ENCODE measurements at regions of chr3 and their contacts with region 1.

Region 1: DNA sequence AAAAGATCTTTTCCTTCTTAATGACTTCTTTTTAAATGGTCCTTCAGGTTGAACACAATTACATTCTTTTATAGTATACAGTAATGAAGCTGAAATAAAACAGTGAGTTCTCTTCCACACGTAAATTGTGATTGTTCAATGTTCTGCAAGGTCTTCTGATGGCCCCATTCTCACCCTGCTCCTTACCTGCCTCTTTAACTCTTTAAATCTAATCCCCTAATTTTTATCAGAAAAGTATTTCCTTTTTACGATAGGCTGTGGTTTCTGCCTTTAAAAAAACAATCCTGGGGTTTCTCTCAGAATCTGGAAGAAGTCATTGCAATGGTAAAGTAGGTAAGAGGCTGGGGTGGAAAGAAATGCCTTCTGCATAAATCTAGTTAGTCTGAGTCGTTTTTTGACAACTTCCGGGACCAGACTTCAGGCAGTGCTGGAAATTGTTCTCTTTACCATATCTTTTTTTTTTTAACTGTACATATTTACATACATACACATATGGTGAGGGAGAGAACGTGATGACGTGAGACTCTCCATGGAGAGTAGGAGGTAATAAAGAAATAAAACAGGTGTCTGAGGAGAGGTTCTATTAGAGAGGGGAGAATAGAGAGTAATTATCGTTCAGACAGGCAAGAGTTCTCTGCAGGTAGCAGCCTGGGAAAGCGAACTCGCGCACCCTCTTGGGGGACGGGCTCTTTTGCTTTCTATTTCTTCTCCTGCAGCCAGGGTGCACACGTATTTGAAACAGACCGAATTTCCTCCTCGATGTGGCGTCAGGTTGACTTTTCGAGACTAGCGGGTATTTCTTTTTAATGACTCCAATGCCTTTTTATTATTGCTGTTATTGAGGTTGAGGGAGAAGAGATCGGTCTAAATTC is at the start of gene SIDT1:
- DNase-seq: peak; percentile 85
- ATAC-seq: peak; percentile 78
- H3K4me3 Mint-ChIP-seq: peak within 1 kb of the TSS; percentile 89
- H3K27ac Mint-ChIP-seq: peak within 1 kb of the TSS; percentile 96
- H3K4me1 Mint-ChIP-seq: peaks cover 49% of the 10 kb centered on the region
- H3K27me3 Mint-ChIP-seq: no peaks in the 10 kb centered on the region
- total RNA-seq, gene SIDT1: 19.0 to 19.7 TPM

Region 2: DNA sequence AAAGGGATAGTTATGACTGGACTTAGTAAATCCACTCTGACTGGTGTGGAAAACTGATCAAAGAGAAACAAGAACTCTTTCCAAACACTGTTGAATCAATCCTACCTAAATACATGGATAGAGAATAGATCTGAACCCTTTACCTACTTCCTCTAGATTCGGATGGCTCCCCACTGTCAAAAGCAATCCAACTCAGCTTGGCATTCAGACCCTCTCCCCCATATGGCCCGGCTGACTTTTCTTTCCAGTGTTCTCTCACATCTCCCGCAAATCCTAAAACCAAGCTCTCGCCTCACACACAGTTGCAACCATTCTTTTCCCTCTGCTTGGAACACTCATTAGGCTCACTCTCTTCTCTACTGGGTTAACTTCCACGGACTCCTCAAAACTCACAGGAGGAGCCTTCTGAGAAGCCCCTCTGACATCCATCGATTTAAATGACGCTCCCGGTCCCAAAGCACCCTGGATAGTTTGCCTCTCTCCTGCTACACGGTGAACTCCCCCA is 17.7 kb before region 1 on chr3:
- CTCF ChIA-PET with region 1: interaction called, 5 read pairs
- POLR2A ChIA-PET with region 1: interaction called, 6 read pairs
- intact Hi-C with region 1: loop called (anchors 1 kb)
- DNase-seq: no peak
- ATAC-seq: peak; percentile 30
- H3K4me3 Mint-ChIP-seq: no peak overlapping the region
- H3K27ac Mint-ChIP-seq: no peak overlapping the region
- H3K4me1 Mint-ChIP-seq: peaks cover 10% of the 10 kb centered on the region
- H3K27me3 Mint-ChIP-seq: peaks cover 6% of the 10 kb centered on the region

Region 3: DNA sequence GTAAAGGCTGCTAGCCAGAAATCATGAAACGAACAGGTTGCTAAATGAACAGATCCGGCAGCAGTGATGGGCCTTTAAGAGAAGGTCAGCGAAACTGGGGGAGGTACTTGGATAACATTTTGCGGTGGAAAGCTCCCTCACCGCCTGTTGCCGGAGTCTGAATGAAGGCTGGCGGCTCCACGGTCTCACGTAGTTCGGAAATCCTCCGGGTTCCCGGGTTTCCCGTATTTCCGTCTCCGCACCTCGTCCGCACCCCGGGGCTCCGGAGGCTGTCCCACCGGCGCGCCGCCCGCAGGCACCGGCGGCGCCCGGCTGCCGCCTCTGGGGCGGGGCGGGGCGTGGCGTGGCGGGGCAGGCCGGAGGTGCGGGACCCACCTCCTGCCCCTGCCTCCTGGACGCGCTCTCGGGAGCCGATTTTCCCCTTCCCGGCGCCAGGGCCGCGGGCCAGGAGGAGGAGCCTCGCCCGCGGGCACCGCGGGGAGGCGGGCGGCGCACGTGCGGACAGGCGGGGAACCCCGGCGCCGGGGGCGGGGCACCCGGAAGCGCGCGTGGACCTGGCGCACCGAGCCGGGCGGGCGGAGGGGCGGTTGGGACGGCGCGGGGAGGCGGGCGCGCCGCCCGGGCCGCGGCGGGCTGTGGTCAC is 415.4 kb after region 1 on chr3 and contains the start of gene ZDHHC23:
- CTCF ChIA-PET with region 1: no interaction called
- POLR2A ChIA-PET with region 1: no interaction called
- intact Hi-C with region 1: no loop called
- DNase-seq: peak; percentile 74
- ATAC-seq: peak; percentile 75
- H3K4me3 Mint-ChIP-seq: peak within 1 kb of the TSS; percentile 76
- H3K27ac Mint-ChIP-seq: peak within 1 kb of the TSS; percentile 79
- H3K4me1 Mint-ChIP-seq: peaks cover 11% of the 10 kb centered on the region
- H3K27me3 Mint-ChIP-seq: peaks cover 25% of the 10 kb centered on the region
- total RNA-seq, gene ZDHHC23: 4.5 to 5.1 TPM